ENCODE measurements at regions of chr17 and their contacts with region 1.

Region 1: DNA sequence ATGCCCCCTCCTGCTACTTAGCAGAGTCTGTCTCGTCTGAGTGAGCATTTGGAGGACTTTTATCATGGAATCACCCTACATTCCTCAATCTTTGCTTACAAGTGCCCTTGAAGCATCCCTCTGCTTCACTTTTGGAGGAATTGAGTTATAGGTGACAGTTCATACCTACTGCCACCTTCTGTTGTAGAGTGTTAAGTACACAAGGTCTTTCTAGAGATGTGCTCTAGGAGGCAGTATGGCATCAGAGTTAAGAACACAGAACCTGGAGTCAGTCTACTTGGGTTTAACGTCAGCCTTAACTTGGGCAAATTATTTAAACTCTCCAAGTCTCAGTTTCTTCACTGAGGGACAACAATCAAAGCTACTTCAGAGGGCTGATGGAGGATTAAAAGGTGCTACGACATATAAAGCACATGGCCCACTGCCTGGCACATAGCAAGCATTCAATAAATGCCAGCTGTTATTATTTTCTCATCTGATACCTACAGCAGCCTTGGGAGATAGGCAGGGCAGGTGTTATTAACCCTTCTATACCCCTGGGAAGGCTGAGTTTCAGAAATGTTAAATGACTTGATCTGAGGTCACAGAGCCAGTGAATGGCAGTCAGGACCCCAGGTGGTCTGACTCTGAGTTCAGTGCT is 62.2 kb downstream of the UTP18 start:
- DNase-seq: peak in 2 of 9 donors; percentile 9 to 31
- ATAC-seq: peak; percentile 61
- H3K4me3 ChIP-seq: no peak overlapping the region
- H3K4me3 Mint-ChIP-seq: no peak overlapping the region
- H3K27ac ChIP-seq: no peak overlapping the region
- H3K27ac Mint-ChIP-seq: no peak overlapping the region
- H3K4me1 ChIP-seq: no peaks in the 10 kb centered on the region
- H3K4me1 Mint-ChIP-seq: no peaks in the 10 kb centered on the region
- H3K27me3 ChIP-seq: no peaks in the 10 kb centered on the region
- H3K27me3 Mint-ChIP-seq: peaks cover 0 to 16% (median 12%) of the 10 kb centered on the region in 5 donors

Region 2: GRCh38 chr17:51351890-51352289 is 29.4 kb after region 1 on chr17:
- CTCF ChIA-PET with region 1: no interaction called
- POLR2A ChIA-PET with region 1: no interaction called
- intact Hi-C with region 1: no loop called
- DNase-seq: no peak
- ATAC-seq: no peak
- H3K4me3 ChIP-seq: no peak overlapping the region
- H3K4me3 Mint-ChIP-seq: no peak overlapping the region
- H3K27ac ChIP-seq: no peak overlapping the region
- H3K27ac Mint-ChIP-seq: no peak overlapping the region
- H3K4me1 ChIP-seq: no peaks in the 10 kb centered on the region
- H3K4me1 Mint-ChIP-seq: peaks cover 0 to 2% (median 0%) of the 10 kb centered on the region in 7 donors
- H3K27me3 ChIP-seq: no peaks in the 10 kb centered on the region
- H3K27me3 Mint-ChIP-seq: peaks cover 0 to 50% (median 9%) of the 10 kb centered on the region in 5 donors

Region 3: DNA sequence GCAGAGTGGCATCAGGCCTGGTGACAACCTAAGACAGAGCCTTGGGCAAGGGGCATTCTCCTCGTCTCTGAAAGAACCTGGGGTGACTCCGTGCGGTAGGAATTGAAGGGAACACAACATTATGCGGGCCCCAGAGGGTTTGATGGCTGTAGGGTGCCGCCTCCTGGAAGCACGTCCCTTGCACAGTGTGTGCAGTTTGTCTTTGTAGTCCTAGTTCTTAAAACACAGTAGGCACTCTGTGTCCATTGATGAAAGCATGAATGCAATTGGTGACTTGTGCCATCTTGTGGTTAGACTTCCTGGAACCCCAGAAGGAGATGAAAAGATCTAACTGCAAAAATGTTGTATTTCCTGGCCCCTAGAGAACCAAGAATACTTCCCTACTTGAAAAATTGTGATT is 217.6 kb after region 1 on chr17:
- CTCF ChIA-PET with region 1: no interaction called
- POLR2A ChIA-PET with region 1: no interaction called
- intact Hi-C with region 1: loop called in 1 of 2 experiments (anchors 5 kb)
- DNase-seq: peak in 6 of 9 donors; percentile 5 to 41 (median 22)
- ATAC-seq: peak; percentile 41
- H3K4me3 ChIP-seq: no peak overlapping the region
- H3K4me3 Mint-ChIP-seq: peak overlapping the region in 6 of 10 donors; percentile 3 to 45 (median 12)
- H3K27ac ChIP-seq: no peak overlapping the region
- H3K27ac Mint-ChIP-seq: peak overlapping the region in 7 of 9 donors; percentile 5 to 66 (median 56)
- H3K4me1 ChIP-seq: peaks cover 0 to 4% of the 10 kb centered on the region in 2 donors
- H3K4me1 Mint-ChIP-seq: peaks cover 4 to 25% (median 19%) of the 10 kb centered on the region in 7 donors
- H3K27me3 ChIP-seq: no peaks in the 10 kb centered on the region
- H3K27me3 Mint-ChIP-seq: peaks cover 0 to 3% (median 0%) of the 10 kb centered on the region in 5 donors